ENCODE measurements at regions of chr3 and their contacts with region 1.

Region 1: DNA sequence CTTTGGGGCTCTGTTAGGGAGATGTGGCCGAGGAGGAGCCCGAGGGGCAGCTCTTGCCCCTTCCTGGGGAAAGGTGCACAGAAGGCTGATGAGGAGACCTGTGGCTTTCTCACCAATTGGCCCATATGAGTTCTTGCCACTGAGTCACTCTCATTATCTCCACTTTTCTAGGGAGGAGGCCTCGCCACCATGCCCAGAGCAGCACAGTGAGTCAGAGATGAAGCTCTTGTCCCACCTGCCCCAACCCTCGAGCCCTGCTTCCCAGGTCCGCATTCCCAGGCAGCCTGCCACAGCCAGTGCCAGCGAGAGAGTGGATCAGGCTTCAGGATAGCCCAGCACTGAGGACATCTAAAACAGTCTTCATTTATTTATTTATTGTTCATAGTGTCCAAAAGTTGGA is 53.5 kb downstream of the AMOTL2 start:
- DNase-seq: no peak
- ATAC-seq: no peak
- H3K4me3 ChIP-seq: no peak overlapping the region
- H3K27ac ChIP-seq: no peak overlapping the region
- H3K4me1 ChIP-seq: peaks cover 0 to 3% (median 0%) of the 10 kb centered on the region in 3 donors
- H3K27me3 ChIP-seq: no peaks in the 10 kb centered on the region
- CTCF ChIP-seq: no peak

Region 2: GRCh38 chr3:134357261-134358184 is 36.8 kb after region 1 on chr3:
- intact Hi-C with region 1: loop called in 2 of 3 experiments (anchors 5 kb)
- DNase-seq: peak in 2 of 6 donors; percentile 21 to 35
- ATAC-seq: peak in 3 of 4 donors; percentile 37 to 54 (median 40)
- H3K4me3 ChIP-seq: no peak overlapping the region
- H3K27ac ChIP-seq: peak overlapping the region; percentile 29 to 77 (median 50)
- H3K4me1 ChIP-seq: peaks cover 26 to 42% (median 32%) of the 10 kb centered on the region in 3 donors
- H3K27me3 ChIP-seq: no peaks in the 10 kb centered on the region
- CTCF ChIP-seq: no peak